GM10248 (cell line): ENCODE measurements at regions of chr20 and their contacts with region 1.

Region 1: DNA sequence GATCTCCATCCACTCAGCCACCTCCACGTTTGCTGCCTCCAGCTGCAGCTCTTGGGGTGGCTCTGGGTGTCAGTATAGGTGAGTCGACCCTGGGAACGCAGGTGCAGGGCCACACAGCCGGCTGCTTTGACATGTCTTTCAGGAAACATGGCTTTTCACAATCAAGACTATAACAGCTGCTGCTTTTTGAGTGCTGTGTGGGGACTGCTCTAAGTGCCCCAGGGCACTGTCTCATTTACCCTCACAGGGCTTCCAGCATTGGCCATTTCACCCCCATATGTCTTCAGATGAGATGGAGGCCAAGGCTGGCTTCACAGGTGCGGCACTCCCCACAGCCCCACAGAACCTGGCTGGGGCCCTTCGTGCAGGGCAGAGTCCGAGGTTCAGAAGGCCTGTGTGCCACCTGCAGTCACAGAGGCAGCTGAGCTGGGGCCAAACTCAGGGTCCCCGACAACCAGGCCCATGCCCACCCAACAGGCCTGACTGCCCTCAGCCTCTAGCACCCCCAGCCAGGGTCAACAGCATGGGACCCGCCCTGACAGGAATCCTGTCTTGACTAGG is 14.9 kb upstream of the CST7 start:
- DNase-seq: no peak
- CTCF ChIP-seq: no peak

Region 2: DNA sequence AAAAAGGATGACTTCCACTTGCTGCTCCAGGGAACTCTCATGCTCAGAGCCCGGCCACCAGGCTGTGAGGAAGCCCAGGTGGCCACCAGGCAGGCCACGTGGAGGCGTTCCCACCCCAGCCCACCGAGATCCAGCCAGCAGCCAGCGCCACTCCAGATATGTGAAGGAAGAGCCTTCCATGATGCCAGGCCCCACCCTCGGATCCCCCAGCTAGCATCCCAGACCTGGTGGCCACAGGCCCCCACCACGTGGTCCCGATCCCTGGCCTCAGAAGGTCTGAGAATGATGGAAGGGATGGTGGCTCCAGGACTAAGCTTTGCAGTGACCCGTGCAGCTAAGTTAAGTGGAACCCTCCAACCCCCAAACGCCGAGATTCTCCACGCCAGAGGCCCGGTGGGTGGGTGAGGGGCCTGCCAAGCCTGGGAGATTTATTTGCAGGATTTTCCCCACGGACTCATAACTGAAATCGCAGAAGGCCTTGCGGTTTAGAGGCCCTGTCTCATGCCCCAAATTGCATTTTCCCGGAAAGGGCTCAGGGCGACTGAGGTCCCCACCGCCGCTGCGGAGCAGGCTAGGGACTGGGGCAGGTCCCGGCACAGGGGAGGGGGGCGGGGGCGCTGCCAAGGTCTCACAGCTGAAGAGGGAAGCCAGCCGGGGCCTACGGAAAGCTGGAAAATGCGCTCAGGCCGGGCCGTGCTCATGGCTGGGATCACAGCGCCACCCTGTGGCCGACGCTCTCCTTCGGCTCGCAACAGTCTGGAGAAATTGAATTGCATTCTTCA is 16.2 kb before region 1 on chr20:
- CTCF ChIA-PET with region 1: interaction called, 10 read pairs
- POLR2A ChIA-PET with region 1: no interaction called
- DNase-seq: peak; percentile 81
- CTCF ChIP-seq: peak; percentile 94